Activated CD4-positive, alpha-beta memory T cell treated with anti-CD3 and anti-CD28 coated beads, Interleukin-2, amount 10 ng/mL, durations not matched to agents 7 days and 5 days (primary cell): ENCODE measurements at regions of chr19 and their contacts with region 1.

Region 1: GRCh38 chr19:47013041-47013517 is 6.6 kb upstream of the NPAS1 start:
- DNase-seq: peak; percentile 66
- H3K4me3 Mint-ChIP-seq: no peak overlapping the region
- H3K27ac Mint-ChIP-seq: no peak overlapping the region
- H3K4me1 Mint-ChIP-seq: peaks cover 9% of the 10 kb centered on the region
- H3K27me3 Mint-ChIP-seq: peaks cover 15% of the 10 kb centered on the region

Region 2: GRCh38 chr19:46850228-46851203 is 162.6 kb before region 1 on chr19 and contains the start of gene AP2S1:
- CTCF ChIA-PET with region 1: interaction called, 15 read pairs
- POLR2A ChIA-PET with region 1: no interaction called
- DNase-seq: peak; percentile 94
- H3K4me3 Mint-ChIP-seq: peak within 1 kb of the TSS; percentile 92
- H3K27ac Mint-ChIP-seq: peak within 1 kb of the TSS; percentile 78
- H3K4me1 Mint-ChIP-seq: peaks cover 33% of the 10 kb centered on the region
- H3K27me3 Mint-ChIP-seq: no peaks in the 10 kb centered on the region
- total RNA-seq, gene AP2S1: 116 to 117 TPM

Region 3: DNA sequence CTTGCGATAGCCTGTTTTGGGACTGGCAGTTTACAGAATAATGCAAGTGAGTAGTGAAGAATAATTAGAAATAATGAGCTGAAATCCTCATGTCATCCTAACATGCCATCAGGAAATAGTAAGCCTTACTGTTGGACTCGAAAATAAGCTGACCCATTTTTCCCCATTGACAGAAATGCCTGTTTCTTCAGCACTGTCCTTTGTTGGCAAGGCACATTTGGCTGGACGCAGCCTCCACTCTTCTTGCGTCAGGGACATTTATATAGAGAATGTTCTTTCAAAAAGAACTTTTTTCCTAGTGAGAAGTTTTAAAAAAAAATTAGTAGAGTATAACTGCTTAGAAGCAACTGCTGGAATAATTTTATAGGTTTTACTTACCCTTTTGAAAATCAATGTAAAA is 105.2 kb before region 1 on chr19:
- CTCF ChIA-PET with region 1: interaction called, 11 read pairs
- POLR2A ChIA-PET with region 1: no interaction called
- DNase-seq: no peak
- H3K4me3 Mint-ChIP-seq: no peak overlapping the region
- H3K27ac Mint-ChIP-seq: no peak overlapping the region
- H3K4me1 Mint-ChIP-seq: peaks cover 34% of the 10 kb centered on the region
- H3K27me3 Mint-ChIP-seq: no peaks in the 10 kb centered on the region

Region 4: GRCh38 chr19:46985542-46986415 is 27.3 kb before region 1 on chr19:
- CTCF ChIA-PET with region 1: interaction called, 16 read pairs
- POLR2A ChIA-PET with region 1: no interaction called
- DNase-seq: no peak
- H3K4me3 Mint-ChIP-seq: no peak overlapping the region
- H3K27ac Mint-ChIP-seq: no peak overlapping the region
- H3K4me1 Mint-ChIP-seq: peaks cover 21% of the 10 kb centered on the region
- H3K27me3 Mint-ChIP-seq: no peaks in the 10 kb centered on the region

Region 5: DNA sequence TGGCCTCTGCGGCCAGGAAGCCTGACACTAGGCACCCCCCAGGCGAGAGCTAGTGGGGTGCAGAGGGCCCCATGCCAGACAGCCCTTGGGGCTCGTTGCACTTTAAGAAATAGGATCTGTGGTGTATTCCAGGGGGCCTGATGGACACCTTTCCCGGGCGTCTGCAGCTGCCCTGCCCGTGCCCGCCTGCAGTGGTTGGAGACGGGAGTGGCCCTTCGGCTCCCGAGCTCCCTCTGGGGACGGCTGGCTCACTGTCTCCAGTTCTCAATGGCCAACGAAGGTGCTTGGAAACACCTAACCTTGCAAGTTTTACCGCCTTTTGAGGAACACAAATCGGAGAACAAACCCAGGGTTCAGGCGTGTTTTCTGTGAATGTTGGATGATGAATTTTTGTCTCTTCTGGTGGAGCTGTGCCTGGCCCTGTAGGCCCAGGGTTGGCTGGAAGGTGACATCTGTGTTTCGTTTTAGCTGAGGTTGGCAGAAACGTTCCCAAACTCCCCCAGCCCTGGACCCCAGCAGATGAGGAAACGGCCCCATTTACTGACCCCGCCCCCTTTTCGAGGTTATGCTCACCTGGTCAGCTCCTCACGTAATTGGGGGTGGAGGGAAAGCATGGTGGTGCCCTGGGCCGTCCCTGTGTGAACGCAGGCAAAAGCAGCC is 10.8 kb before region 1 on chr19:
- CTCF ChIA-PET with region 1: interaction called, 15 read pairs
- POLR2A ChIA-PET with region 1: interaction called, 3 read pairs
- DNase-seq: no peak
- H3K4me3 Mint-ChIP-seq: no peak overlapping the region
- H3K27ac Mint-ChIP-seq: no peak overlapping the region
- H3K4me1 Mint-ChIP-seq: no peaks in the 10 kb centered on the region
- H3K27me3 Mint-ChIP-seq: peaks cover 8% of the 10 kb centered on the region

Region 6: DNA sequence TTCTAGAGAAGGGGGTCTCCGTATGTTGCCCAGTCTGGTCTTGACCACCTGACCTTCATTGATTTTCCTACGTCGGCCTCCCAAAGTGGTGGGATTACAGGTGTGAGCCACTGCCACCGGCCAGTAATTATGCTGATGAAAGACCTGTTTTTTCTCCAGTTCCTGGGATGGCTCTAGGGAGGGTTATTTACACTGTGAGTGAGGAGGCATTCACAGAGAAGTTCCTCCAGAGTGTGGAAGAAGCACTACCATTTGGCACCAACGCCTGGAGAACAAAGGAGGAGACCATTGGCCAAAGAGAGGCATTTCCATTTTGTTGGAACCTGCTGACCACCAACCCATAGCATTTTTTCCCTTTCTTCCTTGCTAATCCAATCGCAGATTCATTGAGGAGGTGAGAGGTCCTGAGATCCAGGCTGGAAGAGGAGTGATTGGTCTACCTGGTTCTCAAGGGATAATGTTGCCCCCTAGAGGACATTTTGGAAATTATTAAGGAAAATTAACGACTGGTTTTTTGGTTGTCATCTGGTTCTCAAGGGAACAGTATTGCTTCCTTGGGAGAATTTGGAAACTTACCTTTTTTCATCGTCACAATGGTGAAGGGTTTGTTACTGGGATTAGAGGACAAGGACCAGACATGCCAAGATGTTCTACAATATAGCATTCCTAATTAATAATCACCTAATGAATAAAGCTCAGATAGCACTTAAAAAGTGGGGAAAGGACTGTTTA is 112.0 kb after region 1 on chr19:
- CTCF ChIA-PET with region 1: interaction called, 13 read pairs
- POLR2A ChIA-PET with region 1: no interaction called
- DNase-seq: peak; percentile 22
- H3K4me3 Mint-ChIP-seq: no peak overlapping the region
- H3K27ac Mint-ChIP-seq: no peak overlapping the region
- H3K4me1 Mint-ChIP-seq: peaks cover 7% of the 10 kb centered on the region
- H3K27me3 Mint-ChIP-seq: peaks cover 2% of the 10 kb centered on the region